Activated naive CD4-positive, alpha-beta T cell treated with anti-CD3 and anti-CD28 coated beads for 36 hours (primary cell): ENCODE measurements at regions of chr14 and their contacts with region 1.

Region 1: DNA sequence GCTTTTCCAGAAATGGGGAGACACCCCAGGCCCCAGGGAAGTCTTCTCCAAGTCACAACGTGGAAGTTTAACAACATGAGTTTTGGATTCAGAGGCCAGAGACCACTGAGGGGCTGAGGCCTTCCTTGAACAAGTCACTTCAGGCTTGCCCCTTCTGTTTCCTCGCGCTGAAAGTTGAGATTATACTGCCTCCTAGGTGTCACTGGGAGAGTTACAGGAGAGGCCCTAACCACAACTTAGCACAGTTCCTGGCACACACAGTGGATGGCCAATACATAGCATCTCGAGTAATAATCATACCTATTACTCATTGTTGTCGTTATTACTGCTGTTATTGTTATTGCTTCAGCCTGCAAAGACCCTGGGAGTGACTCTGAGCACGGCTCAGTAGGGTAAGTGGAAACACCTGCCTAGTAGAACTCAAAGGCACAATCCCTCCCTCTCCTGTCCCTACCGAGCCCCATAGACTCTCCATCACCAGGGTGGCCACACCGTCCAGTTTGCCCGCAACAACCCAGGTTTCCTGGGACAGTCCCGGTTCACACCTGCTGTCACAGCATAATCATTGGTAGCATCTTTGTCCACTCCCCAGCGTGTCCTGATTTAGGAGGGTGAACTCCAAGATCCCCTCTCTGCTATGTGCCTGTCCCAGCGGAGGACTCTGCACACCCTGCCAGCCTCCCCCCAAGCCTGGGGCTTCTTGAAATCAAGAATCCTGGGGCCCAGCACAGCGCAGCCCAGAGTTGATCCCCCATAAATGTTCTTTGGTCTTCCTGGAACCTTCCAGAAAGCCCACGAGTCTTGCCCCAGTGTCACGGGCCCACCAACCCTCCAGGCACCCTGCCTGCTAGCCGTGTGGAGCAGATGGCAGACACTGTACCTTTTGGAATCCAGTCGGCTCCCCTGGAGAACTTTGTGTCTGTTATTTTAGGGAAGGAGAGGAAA is 85.0 kb downstream of the SYNE3 start:
- DNase-seq: peak; percentile 30
- H3K4me3 Mint-ChIP-seq: no peak overlapping the region
- H3K27ac Mint-ChIP-seq: no peak overlapping the region
- H3K4me1 Mint-ChIP-seq: no peaks in the 10 kb centered on the region
- H3K27me3 Mint-ChIP-seq: no peaks in the 10 kb centered on the region

Region 2: DNA sequence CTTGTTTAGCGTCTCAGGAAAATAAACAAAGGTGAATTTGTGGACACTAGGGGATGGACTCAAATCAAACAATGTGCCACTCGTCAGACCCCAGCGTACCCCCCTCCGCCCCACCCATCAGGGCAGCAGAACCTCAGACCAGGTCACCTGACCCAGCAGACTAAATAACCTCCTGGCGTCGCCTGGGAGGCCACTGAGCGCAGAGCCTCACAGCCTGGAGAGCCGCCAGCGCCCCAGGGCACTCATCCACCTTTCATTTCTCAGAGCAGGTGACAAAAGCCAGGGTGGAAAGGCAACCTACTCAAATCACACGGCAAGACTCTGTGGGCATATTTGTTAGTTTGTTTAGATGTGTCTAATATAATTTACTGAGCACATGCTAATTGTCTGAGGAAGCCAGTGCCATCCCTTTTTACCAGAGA is 375.0 kb before region 1 on chr14:
- CTCF ChIA-PET with region 1: no interaction called
- intact Hi-C with region 1: no loop called
- DNase-seq: no peak
- H3K4me3 Mint-ChIP-seq: no peak overlapping the region
- H3K27ac Mint-ChIP-seq: no peak overlapping the region
- H3K4me1 Mint-ChIP-seq: peaks cover 9% of the 10 kb centered on the region
- H3K27me3 Mint-ChIP-seq: no peaks in the 10 kb centered on the region

Region 3: GRCh38 chr14:95483309-95484165 is 52.1 kb after region 1 on chr14:
- CTCF ChIA-PET with region 1: no interaction called
- intact Hi-C with region 1: no loop called
- DNase-seq: no peak
- H3K4me3 Mint-ChIP-seq: no peak overlapping the region
- H3K27ac Mint-ChIP-seq: no peak overlapping the region
- H3K4me1 Mint-ChIP-seq: peaks cover 45% of the 10 kb centered on the region
- H3K27me3 Mint-ChIP-seq: no peaks in the 10 kb centered on the region

Region 4: GRCh38 chr14:95774265-95775160 is 343.0 kb after region 1 on chr14:
- CTCF ChIA-PET with region 1: no interaction called
- intact Hi-C with region 1: loop called (anchors 1 kb)
- DNase-seq: peak; percentile 76
- H3K4me3 Mint-ChIP-seq: no peak overlapping the region
- H3K27ac Mint-ChIP-seq: no peak overlapping the region
- H3K4me1 Mint-ChIP-seq: peaks cover 2% of the 10 kb centered on the region
- H3K27me3 Mint-ChIP-seq: peaks cover 7% of the 10 kb centered on the region